ENCODE measurements at regions of chr16 and their contacts with region 1.

Region 1: DNA sequence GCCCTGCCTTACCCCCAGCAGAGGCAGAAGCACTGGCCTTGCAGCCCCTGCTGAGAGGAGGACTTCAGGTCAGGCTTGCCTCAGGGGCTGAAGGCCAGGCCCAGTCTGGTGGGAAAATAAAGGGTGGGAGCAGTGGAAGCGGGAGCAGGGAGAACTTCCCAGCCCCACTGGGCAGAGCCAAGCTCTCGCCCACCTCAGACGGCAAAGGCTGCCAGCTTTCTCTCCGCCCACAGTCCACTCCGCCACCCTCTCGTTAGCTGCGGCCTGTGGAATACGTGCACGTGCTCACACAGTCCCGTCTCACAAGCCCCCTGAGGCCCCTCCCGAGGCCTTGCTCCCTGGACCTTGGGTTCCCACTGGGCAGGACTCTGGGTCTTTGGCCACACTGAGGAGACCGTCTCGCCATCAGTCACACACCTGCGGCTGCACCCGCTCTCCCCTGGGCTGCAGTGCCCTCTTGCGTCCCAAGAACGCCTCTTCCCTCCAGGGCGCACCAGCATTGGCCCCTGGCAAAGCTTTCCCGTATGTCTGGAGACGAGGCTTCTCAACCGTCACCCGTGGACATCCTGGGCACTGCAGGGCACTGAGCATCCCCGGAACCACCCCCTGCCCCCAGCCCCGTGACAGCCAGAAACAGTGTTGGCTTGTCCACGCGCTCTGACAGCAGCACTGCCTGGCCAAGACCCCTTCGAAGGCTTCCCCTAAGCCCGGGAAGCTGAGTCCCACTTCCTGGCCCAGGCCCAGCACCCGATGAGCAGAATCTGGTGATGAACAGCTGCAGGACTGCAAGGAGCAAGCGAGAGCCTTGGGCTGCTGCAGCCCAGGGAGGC is 8.3 kb downstream of the MRPL28 start:
- DNase-seq: peak; percentile 69

Region 2: DNA sequence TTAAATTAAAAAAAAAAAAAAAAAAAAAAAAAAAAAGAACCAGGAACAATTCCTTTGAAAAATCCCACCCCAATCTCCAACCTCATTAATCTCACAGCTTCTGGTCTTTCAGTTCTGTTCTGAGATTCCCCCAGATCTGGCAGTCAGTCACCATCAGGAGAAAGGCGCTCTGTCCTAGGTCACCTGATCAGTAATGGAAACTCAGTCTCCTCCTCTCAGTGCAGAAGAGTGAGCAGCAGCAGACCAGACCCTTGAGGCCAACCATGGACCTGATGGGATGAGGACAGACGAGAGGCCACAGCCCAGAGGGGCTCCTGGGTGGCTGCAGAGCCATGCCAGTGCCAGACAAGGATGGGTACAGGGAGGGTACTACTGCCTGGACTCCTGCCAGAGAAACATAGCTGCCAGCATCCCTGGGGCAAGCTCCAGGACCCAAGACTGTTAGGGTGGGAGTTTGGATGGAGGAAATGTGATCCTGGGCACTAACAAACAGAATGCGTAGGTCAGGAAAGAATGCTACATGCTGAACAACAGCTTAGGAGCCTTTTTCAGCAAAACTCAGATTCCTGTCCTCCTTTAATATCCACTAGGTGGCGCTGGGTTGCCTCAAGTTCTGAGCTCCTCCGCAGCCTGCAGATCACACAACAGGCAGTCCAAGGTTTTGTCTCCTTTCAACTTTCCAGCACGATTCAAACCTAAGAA is 255.3 kb before region 1 on chr16:
- CTCF ChIA-PET with region 1: interaction called, 15 read pairs
- POLR2A ChIA-PET with region 1: no interaction called
- DNase-seq: peak; percentile 79

Measured in HEK293T (cell line).